Dendritic cell treated with granulocyte-macrophage colony-stimulating factor and Interleukin-4, amounts not matched to agents 40 ng/mL and 50 ng/mL, for 4 days (primary cell): ENCODE measurements at regions of chr18 and their contacts with region 1.

Region 1: GRCh38 chr18:12657684-12658425 is at the start of gene SPIRE1:
- H3K4me3 Mint-ChIP-seq: peak within 1 kb of the TSS; percentile 92
- H3K27ac Mint-ChIP-seq: peak within 1 kb of the TSS; percentile 86
- H3K4me1 Mint-ChIP-seq: peaks cover 39% of the 10 kb centered on the region
- H3K27me3 Mint-ChIP-seq: peaks cover 19% of the 10 kb centered on the region

Region 2: DNA sequence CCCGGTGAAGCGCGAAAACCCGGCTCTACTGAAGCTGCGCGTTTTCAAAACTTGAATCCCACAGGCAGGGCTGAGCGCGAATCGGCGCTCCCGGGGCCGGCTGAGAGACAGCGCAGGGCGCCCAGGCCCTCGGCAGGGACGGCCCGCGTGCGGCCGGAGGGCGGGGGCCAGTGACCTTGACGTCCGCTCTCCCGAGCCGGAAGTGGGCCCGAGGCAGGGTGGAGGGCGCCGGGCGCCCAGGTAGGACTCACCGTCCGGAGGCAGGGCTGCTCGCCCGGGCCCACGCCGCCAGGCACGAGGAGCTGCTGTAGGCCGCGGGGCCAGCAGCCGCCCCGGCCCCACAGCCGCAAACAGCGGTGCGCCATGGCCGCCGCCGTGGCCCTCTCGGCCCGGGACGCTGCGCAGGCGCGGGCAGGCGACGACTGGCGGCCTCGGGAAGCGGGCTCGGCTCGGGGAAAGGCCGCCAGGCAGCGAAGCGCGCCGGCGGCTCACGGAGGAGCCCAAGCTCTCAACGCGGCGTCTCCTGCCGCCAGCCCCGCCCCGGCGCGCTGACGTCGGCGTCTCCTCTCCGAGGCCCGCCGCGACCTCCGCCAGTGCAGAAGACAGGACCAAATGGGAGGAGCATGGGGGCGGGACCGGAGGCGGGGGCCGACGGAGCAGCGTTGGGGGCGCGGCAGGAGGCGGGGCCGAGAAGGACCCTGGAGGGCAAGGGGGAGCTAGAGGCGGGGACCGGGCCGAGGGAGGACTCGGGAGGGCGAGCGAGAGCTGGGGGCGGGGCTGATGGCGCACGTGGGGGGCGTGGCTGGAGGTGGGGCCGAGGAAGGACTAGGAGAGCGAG is 280.9 kb before region 1 on chr18 and contains the start of gene AFG3L2:
- intact Hi-C with region 1: loop called (anchors 1 kb)
- H3K4me3 Mint-ChIP-seq: peak within 1 kb of the TSS; percentile 80
- H3K27ac Mint-ChIP-seq: peak within 1 kb of the TSS; percentile 87
- H3K4me1 Mint-ChIP-seq: peaks cover 54% of the 10 kb centered on the region
- H3K27me3 Mint-ChIP-seq: no peaks in the 10 kb centered on the region

Region 3: DNA sequence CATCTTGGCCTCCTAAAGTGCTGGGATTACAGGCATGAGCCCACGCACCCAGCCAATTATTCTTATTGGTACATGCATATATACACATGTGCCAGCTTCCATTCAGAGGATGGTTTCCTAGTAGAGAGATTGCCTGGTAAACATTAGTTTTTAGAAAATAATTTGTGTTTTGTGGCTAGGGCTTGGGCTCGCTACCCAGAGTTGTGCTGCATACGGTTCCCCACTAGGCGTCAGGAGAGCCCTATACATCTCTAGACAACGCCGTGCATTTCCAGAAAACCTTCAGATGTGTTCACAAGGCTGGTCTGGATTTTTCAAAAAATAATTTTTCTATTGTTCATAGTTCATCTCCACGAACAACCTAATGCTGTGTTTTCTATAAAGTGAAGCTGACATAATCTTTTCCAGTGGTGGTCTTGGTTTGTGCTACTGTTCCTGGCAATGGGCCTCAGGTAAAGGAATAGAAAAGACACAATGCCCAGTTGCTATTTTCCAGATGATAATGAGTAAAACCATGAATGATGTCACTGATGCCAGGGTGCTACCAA is 266.2 kb before region 1 on chr18:
- intact Hi-C with region 1: loop called (anchors 1 kb)
- H3K4me3 Mint-ChIP-seq: no peak overlapping the region
- H3K27ac Mint-ChIP-seq: no peak overlapping the region
- H3K4me1 Mint-ChIP-seq: peaks cover 6% of the 10 kb centered on the region
- H3K27me3 Mint-ChIP-seq: peaks cover 8% of the 10 kb centered on the region

Region 4: GRCh38 chr18:12408247-12408869 is 249.5 kb before region 1 on chr18:
- intact Hi-C with region 1: loop called (anchors 1 kb)
- H3K4me3 Mint-ChIP-seq: peak overlapping the region; percentile 79
- H3K27ac Mint-ChIP-seq: peak overlapping the region; percentile 76
- H3K4me1 Mint-ChIP-seq: peaks cover 25% of the 10 kb centered on the region
- H3K27me3 Mint-ChIP-seq: peaks cover 32% of the 10 kb centered on the region

Region 5: GRCh38 chr18:12540751-12541150 is 117.1 kb before region 1 on chr18:
- intact Hi-C with region 1: loop called (anchors 2 kb)
- H3K4me3 Mint-ChIP-seq: no peak overlapping the region
- H3K27ac Mint-ChIP-seq: no peak overlapping the region
- H3K4me1 Mint-ChIP-seq: peaks cover 14% of the 10 kb centered on the region
- H3K27me3 Mint-ChIP-seq: no peaks in the 10 kb centered on the region

Region 6: GRCh38 chr18:12606592-12607315 is 51.1 kb before region 1 on chr18:
- intact Hi-C with region 1: loop called (anchors 5 kb)
- H3K4me3 Mint-ChIP-seq: peak overlapping the region; percentile 62
- H3K27ac Mint-ChIP-seq: peak overlapping the region; percentile 96
- H3K4me1 Mint-ChIP-seq: peaks cover 54% of the 10 kb centered on the region
- H3K27me3 Mint-ChIP-seq: no peaks in the 10 kb centered on the region